Left ventricle myocardium superior (tissue), 1 donor: ENCODE measurements at regions of chr1 and their contacts with region 1.

Region 1: DNA sequence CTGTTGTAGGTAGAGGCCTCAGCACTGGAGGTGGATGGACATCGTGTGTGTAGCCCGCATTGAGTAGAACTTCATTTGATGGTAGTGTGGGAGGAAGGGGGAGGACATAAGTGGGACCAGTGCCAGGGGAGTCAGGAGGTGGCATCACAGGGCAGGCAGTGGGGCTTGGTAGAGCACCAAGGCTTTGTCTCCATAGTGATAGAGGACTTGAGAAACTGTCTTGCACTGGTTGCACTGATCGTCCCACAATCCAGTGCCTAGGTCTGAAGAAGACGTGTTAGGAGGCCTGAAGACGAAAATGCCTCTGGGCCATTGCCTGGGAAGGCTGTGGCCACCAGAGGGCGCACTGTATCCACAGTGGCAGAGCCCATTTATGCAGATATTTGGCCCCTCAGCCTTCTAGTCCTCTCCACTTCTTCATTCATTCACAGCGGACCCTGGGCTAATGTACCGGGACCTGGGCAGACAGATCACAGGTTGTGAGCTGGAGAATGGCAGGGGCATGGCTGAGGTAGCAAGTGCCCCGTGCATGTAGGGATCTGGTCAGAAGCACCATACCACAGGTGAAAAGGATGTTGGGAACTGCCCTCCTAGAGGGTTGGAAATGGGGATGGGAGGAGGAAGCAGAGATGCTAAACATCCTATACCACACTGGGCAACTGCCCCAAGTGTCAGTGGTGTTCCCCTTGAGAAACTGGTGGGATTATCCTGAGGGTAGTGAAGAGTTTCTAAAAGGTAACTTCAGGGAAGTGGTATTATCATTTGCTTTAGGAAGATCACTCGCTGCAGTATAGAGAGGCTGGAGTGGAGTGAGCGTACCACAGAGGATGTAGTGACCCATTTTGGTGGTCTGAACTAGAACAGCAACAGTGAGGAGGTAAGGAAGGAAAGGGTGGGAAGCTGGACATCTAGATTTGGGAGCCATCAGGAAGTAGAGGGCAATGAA is 95.3 kb downstream of the PIK3R3 start:
- DNase-seq: peak; percentile 94
- ATAC-seq: peak; percentile 64

Region 2: DNA sequence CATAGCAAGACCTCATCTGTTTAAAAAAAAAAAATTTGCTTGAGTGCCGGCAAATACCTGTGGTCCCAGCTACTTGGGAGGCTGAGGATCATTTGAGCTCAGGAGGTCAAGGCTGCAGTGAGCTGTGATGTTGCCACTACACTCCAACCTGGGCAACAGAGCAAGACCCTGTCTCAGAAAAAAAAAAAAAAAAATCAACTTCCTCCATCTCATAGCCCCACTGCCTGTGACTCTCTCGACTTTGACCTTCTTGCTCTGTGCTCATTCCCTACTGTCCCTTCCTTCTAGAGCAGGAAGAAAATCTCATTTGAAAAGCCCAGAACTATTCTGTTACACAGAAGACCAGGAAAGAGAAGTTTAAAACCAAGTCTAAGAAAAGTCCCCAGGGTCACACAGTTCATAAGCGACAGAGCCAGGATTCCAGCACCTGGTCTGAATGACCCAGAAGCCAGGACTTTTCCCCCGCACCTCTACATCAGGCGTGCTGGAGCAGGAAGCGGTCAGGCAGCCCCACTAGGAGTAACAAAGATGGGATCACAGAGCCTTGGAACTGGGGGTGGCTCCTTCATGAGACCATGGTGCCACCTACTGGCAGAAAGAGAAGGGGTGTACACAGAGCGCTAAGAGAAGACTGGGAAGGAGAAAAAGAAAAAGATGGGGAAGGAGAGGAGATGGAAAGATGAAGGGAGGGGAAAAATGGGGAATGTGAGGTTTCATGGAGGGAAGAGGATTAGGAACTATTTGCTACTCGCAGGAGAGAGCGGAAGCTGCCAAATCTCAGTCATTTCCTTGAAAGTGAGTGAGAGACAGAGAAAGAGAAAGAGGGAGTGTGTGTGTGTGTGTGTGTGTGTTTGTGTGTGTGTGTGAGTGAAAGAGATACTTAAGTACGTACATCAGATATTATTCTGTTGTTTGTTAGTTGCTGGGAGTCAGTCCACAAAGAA is 142.2 kb after region 1 on chr1:
- intact Hi-C with region 1: loop called (anchors 2 kb)
- DNase-seq: peak; percentile 68
- ATAC-seq: peak; percentile 78